ENCODE measurements at regions of chr20 and their contacts with region 1.

Region 1: DNA sequence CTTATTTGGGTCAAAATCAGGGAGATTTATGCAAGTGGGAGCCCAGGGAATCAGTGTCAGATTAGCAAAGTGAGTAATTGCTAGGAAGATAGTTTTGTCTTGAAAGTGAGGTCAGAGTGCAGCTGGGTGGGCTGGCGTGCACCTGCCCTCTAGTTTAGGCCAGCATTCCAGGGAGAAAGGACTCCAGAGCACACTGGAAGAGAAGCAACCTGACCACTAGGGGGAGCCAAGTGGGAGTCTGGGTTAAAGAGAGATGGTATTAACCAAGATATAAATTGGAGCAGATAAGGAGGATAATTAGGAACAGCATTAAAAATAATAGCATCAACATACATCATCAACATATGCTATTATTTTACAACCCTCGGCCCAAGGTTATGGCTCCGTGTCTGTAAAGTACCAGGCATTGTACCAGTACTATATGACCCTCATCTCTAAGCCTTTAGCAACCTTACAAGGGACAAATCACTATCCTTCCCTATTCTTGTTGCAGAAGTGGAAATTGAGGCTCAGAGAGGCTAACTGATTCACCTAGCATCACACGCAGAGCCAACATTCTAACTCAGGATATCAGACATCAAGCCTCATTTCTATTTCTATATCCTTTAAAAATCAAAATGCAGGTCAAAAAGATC is 57.8 kb downstream of the SLC2A10 start:
- DNase-seq: no peak
- H3K4me3 ChIP-seq: no peak overlapping the region
- CTCF ChIP-seq: no peak
- POLR2A ChIP-seq: no peak

Region 2: GRCh38 chr20:46715292-46715756 is 51.9 kb before region 1 on chr20:
- intact Hi-C with region 1: no loop called
- DNase-seq: peak; percentile 49 to 90
- H3K4me3 ChIP-seq: no peak overlapping the region
- CTCF ChIP-seq: no peak
- POLR2A ChIP-seq: no peak

Region 3: DNA sequence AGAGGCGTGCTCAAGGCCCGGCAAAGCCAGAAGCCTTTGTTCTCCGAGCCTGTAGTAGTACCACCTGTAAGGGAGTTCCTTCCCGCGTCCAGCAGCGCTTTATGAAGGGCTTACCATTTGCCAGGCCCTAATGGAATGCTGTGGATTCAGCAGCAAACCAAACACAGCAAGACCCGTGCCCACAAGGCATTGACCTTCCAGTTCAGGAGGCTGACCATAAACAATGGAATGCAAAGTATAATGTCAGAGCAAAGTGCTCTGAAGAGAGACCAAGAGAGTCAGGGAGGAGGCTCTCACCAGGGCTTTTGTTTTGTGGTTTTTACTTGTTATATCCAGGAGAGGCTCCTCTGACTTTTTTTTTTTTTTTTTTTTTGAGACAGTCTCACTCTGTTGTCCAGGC is 379.5 kb after region 1 on chr20:
- intact Hi-C with region 1: loop called (anchors 10 kb)
- DNase-seq: no peak
- H3K4me3 ChIP-seq: no peak overlapping the region
- CTCF ChIP-seq: no peak
- POLR2A ChIP-seq: no peak